Thyroid gland (tissue), 4 donors: ENCODE measurements at regions of chr12 and their contacts with region 1.

Region 1: GRCh38 chr12:132908145-132909044 is 21.0 kb upstream of the CHFR start:
- DNase-seq: peak; percentile 99
- H3K4me3 ChIP-seq: peak overlapping the region; percentile 27 to 72 (median 34)
- H3K27ac ChIP-seq: peak overlapping the region in 2 of 3 donors; percentile 64 to 78
- H3K4me1 ChIP-seq: peaks cover 7 to 13% of the 10 kb centered on the region in 2 donors
- H3K27me3 ChIP-seq: no peaks in the 10 kb centered on the region
- CTCF ChIP-seq: no peak
- POLR2A ChIP-seq: peak in 1 of 2 donors; percentile 41

Region 2: GRCh38 chr12:132189378-132190011 is 718.9 kb before region 1 on chr12:
- intact Hi-C with region 1: no loop called
- DNase-seq: peak; percentile 91 to 92
- H3K4me3 ChIP-seq: peak overlapping the region; percentile 18 to 32 (median 20)
- H3K27ac ChIP-seq: peak overlapping the region in 2 of 3 donors; percentile 45 to 52
- H3K4me1 ChIP-seq: peaks cover 15 to 18% of the 10 kb centered on the region in 2 donors
- H3K27me3 ChIP-seq: no peaks in the 10 kb centered on the region
- CTCF ChIP-seq: peak in 1 of 6 experiments; percentile 20
- POLR2A ChIP-seq: peak in 1 of 2 donors; percentile 71

Region 3: DNA sequence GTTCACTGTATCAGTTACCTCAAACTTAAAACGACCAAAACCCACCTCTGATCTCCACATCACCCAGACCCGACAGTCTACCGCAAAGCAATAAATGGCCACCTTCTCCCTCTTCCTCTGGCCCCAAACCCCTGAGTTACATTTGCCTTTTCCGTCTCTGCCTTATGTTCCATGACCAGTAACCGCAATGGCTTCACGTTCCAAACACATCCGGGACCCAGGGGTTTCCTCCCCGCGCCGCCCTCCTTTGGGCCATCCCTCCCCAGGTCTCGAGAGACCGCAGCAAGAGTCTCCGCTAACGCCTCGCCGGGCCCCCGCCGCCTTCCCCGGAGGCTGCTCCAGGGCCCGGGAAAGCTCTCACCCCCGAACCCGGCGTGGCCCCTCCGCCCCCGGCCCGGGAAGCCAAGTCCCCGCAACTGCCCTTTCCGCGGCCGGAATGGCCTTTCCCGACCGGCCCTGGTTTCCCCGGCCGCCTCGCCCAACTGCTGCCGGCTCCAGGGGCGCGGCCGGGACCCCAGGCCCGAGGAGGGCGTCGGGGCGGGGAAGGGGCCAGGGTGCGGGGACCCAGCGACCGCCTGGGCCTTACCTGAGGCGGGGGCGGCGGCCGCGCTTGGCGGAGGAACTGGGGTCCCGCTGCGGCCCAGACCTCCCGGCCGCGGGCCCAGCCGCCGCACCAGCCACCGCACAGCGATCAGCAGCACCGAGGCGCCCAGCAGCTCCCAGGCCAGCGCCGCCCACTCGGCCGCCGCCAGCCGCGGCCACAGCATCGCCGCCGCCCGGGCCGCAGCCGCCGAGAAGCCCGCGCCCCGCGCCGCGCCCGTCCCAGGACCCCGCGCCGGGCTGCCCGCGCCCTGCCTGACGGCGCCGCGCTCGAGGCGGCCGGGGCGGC is 147.1 kb before region 1 on chr12 and contains the start of gene ANKLE2:
- intact Hi-C with region 1: loop called (anchors 10 kb)
- DNase-seq: peak; percentile 50 to 59
- H3K4me3 ChIP-seq: peak within 1 kb of the TSS; percentile 88 to 93 (median 90)
- H3K27ac ChIP-seq: peak within 1 kb of the TSS; percentile 78 to 98 (median 95)
- H3K4me1 ChIP-seq: peaks cover 16 to 19% of the 10 kb centered on the region in 2 donors
- H3K27me3 ChIP-seq: no peaks in the 10 kb centered on the region
- CTCF ChIP-seq: no peak
- POLR2A ChIP-seq: no peak
- total RNA-seq, gene ANKLE2: 50.7 to 70.7 (median 55.3) TPM